Gastrocnemius medialis (tissue), 4 donors: ENCODE measurements at regions of chr7 and their contacts with region 1.

Region 1: GRCh38 chr7:158500651-158501052 is 87.0 kb downstream of the PTPRN2 start:
- DNase-seq: no peak
- ATAC-seq: no peak
- H3K4me3 ChIP-seq: no peak overlapping the region
- H3K27ac ChIP-seq: no peak overlapping the region
- H3K4me1 ChIP-seq: no peaks in the 10 kb centered on the region
- H3K27me3 ChIP-seq: peaks cover 0 to 8% (median 0%) of the 10 kb centered on the region in 3 donors
- CTCF ChIP-seq: no peak
- POLR2A ChIP-seq: no peak

Region 2: GRCh38 chr7:158407581-158408317 is 92.9 kb before region 1 on chr7:
- in situ Hi-C with region 1: loop called in 1 of 4 experiments (anchors 25 kb)
- intact Hi-C with region 1: no loop called
- DNase-seq: no peak
- ATAC-seq: no peak
- H3K4me3 ChIP-seq: no peak overlapping the region
- H3K27ac ChIP-seq: no peak overlapping the region
- H3K4me1 ChIP-seq: no peaks in the 10 kb centered on the region
- H3K27me3 ChIP-seq: no peaks in the 10 kb centered on the region
- CTCF ChIP-seq: no peak
- POLR2A ChIP-seq: no peak